ENCODE measurements at regions of chr12 and their contacts with region 1.

Region 1: GRCh38 chr12:82358200-82359114 is at the starts of genes CCDC59 and METTL25:
- H3K4me3 Mint-ChIP-seq: peak within 1 kb of the TSS; percentile 91
- H3K27ac Mint-ChIP-seq: peak within 1 kb of the TSS; percentile 95
- H3K4me1 Mint-ChIP-seq: peaks cover 49% of the 10 kb centered on the region
- H3K27me3 Mint-ChIP-seq: no peaks in the 10 kb centered on the region

Region 2: DNA sequence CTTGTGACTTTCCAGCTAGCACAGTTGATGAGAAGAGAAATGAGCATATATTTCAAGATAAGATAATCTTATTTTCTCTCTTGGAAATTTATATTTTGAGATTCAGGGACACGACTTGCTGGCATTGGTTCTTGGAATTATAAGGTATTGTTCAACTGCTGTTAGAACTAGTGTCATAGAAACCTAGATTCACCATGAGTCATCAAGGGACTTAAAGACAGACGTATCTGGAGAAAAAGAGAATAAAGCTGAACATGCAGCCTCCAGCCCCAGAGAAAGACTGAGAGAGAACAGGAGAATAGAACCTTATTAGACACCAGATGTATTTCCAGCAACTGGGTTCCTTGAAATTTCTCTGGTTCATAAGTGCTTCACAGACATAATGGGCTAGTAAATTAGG is 404.9 kb before region 1 on chr12:
- intact Hi-C with region 1: loop called (anchors 10 kb)
- H3K4me3 Mint-ChIP-seq: no peak overlapping the region
- H3K27ac Mint-ChIP-seq: no peak overlapping the region
- H3K4me1 Mint-ChIP-seq: peaks cover 52% of the 10 kb centered on the region
- H3K27me3 Mint-ChIP-seq: peaks cover 28% of the 10 kb centered on the region